ENCODE measurements at regions of chr16 and their contacts with region 1.

Region 1: DNA sequence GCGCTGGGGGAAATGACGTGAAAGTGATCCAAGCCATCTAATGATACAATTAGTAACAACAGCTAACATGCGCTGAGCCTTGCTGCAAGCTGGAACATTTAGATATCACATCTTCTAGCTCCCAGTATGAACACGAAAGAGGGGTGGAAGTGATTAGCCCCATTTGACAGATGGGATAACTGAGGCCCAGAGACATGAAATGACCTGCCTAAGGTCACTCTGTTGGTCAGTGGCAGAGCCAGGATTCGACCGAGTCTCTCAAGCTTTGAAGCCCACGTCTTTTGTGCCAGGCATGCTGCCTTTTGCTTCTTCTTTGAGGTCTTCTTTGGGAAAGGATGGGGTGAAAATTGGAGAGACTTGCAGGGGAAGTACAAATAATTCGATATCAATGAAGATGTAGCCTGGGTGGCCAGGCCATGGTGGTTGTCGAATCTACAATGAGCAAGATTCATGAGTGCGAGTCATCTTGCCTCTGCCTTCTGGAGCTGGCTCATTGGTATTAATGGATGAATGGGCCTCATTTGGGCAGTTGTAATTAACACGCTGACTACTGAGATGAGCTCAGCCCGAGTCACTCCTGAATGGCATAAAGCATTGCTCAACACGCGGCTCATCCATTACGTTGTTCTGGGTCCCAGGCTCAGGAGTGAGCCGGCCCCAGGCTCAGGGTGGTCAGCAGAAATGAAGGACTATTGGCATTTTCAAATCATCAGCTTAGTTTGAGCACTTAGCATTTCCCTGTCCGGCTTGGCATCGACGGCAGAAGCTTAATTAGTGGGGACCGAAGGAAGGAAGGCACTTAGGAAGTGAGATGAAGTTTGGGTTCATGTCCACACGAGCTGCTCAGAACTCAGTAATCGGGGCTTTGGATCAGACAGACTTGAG is 28.0 kb upstream of the GPRC5B start:
- DNase-seq: no peak
- ATAC-seq: no peak
- H3K4me3 ChIP-seq: no peak overlapping the region
- H3K27ac ChIP-seq: no peak overlapping the region
- H3K4me1 ChIP-seq: no peaks in the 10 kb centered on the region
- H3K27me3 ChIP-seq: peaks cover 0 to 14% (median 3%) of the 10 kb centered on the region in 3 donors
- CTCF ChIP-seq: no peak

Region 2: DNA sequence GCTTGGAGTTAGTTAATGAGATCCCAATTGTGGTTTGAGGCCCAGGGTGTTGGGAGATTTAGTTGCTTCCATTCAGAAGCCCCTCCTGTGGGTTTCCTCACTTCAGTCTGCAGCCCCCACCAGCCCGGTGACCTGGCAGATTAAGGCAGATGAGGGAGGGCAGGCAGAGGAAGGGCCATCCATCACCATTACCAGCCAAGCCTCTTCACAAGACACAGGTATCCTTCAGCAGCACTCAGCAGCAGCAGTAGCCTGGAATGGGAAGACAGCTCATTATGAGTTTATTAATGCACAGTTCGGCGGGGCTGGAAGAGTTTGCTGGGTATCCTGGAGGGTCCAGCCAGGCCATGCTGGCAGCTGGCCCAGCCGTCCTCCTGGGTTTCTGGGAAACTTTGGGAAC is 61.9 kb after region 1 on chr16:
- intact Hi-C with region 1: loop called in 1 of 2 experiments (anchors 10 kb)
- DNase-seq: no peak
- ATAC-seq: no peak
- H3K4me3 ChIP-seq: no peak overlapping the region
- H3K27ac ChIP-seq: no peak overlapping the region
- H3K4me1 ChIP-seq: no peaks in the 10 kb centered on the region
- H3K27me3 ChIP-seq: no peaks in the 10 kb centered on the region
- CTCF ChIP-seq: no peak